ENCODE measurements at regions of chr2 and their contacts with region 1.

Region 1: GRCh38 chr2:219851169-219851568 is 223.7 kb downstream of the SLC4A3 start:
- DNase-seq: no peak
- ATAC-seq: no peak
- H3K4me3 ChIP-seq: no peak overlapping the region
- H3K27ac ChIP-seq: no peak overlapping the region
- H3K4me1 ChIP-seq: peaks cover 4% of the 10 kb centered on the region; the same call in 1 of the 2 replicates
- H3K27me3 ChIP-seq: peaks cover 22% of the 10 kb centered on the region
- CTCF ChIP-seq: no peak
- POLR2A ChIP-seq: no peak
- RAD21 ChIP-seq: no peak

Region 2: DNA sequence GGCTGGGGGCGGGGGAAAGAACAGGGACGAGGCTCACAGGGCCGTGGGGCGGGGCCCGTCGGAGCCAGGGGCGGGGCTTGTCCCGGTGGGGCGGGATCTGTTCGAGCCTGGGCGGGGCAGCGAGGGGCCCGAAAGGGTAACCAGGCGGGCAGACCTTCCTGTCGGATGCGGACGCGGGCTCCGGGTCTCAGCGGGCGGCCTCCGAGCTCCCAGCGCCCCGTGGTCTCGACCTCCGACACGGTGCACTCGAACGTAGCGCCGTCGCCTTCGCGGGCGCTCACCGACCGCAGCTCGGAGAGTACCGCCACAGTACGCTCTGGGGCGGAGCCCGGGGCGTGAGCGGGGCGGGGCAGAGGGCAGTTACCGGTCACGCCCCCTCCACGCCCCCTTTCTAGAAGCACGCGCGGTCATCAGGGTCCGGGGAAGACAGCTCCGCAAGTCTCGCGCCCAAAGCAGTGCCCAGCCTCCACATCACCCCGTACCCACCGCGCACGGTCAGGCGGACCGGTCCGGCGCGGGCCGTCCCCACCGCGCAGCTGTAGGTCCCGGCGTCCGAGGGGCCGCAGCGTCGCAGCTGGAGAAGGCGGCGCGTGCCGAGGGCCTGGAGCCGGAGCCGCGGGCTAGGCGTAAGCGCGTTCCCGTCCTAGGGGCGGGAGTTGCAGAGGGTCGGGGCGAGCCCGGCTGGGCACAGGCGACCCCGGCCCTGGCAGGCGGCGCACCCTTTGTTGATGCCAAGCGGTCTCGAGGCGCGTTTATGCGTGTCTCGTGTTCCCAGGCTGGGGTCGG is 298.6 kb before region 1 on chr2:
- CTCF ChIA-PET with region 1: no interaction called
- POLR2A ChIA-PET with region 1: no interaction called
- dilution Hi-C with region 1: no loop called
- in situ Hi-C with region 1: no loop called
- intact Hi-C with region 1: no loop called
- DNase-seq: peak; percentile 65
- ATAC-seq: peak; percentile 95
- H3K4me3 ChIP-seq: peak overlapping the region; percentile 79
- H3K27ac ChIP-seq: peak overlapping the region; percentile 53
- H3K4me1 ChIP-seq: peaks cover 8% of the 10 kb centered on the region; the same call in 1 of the 2 replicates
- H3K27me3 ChIP-seq: no peaks in the 10 kb centered on the region
- CTCF ChIP-seq: no peak
- POLR2A ChIP-seq: no peak
- RAD21 ChIP-seq: no peak

Region 3: DNA sequence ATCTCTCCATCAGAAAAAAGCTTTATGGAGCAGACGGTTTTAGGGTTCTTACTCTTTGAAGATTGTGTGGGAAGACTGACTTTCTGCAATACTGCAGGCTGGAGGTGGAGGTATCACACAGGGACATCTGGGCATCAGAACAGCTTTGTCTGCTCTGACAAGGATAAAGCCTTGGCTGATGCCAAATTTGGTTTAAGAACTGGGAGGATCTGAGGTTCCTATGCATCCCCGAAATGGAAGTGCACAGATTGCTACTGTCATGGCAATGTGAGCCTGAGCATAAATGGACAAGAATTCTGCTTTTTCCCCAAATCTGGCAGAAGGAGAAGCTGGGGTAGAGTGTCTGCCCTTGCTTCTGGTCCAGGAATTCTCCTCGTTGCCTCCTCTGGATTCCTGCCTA is 200.5 kb after region 1 on chr2:
- CTCF ChIA-PET with region 1: no interaction called
- POLR2A ChIA-PET with region 1: interaction called, 28 read pairs
- dilution Hi-C with region 1: no loop called
- in situ Hi-C with region 1: no loop called
- intact Hi-C with region 1: no loop called
- DNase-seq: no peak
- ATAC-seq: no peak
- H3K4me3 ChIP-seq: no peak overlapping the region
- H3K27ac ChIP-seq: no peak overlapping the region
- H3K4me1 ChIP-seq: no peaks in the 10 kb centered on the region
- H3K27me3 ChIP-seq: no peaks in the 10 kb centered on the region
- CTCF ChIP-seq: no peak
- POLR2A ChIP-seq: no peak
- RAD21 ChIP-seq: no peak